Activated CD4-positive, alpha-beta memory T cell treated with anti-CD3 and anti-CD28 coated beads for 36 hours (primary cell): ENCODE measurements at regions of chr5 and their contacts with region 1.

Region 1: GRCh38 chr5:132419502-132420468 is 50.3 kb downstream of the SLC22A5 start:
- DNase-seq: peak; percentile 78
- H3K4me3 Mint-ChIP-seq: peak overlapping the region; percentile 15
- H3K27ac Mint-ChIP-seq: peak overlapping the region; percentile 83
- H3K4me1 Mint-ChIP-seq: peaks cover 89% of the 10 kb centered on the region
- H3K27me3 Mint-ChIP-seq: no peaks in the 10 kb centered on the region

Region 2: GRCh38 chr5:132473019-132473531 is 53.3 kb after region 1 on chr5:
- CTCF ChIA-PET with region 1: interaction called, 14 read pairs
- POLR2A ChIA-PET with region 1: interaction called, 361 read pairs
- intact Hi-C with region 1: no loop called
- DNase-seq: peak; percentile 90
- H3K4me3 Mint-ChIP-seq: peak overlapping the region; percentile 7
- H3K27ac Mint-ChIP-seq: peak overlapping the region; percentile 91
- H3K4me1 Mint-ChIP-seq: peaks cover 75% of the 10 kb centered on the region
- H3K27me3 Mint-ChIP-seq: no peaks in the 10 kb centered on the region

Region 3: DNA sequence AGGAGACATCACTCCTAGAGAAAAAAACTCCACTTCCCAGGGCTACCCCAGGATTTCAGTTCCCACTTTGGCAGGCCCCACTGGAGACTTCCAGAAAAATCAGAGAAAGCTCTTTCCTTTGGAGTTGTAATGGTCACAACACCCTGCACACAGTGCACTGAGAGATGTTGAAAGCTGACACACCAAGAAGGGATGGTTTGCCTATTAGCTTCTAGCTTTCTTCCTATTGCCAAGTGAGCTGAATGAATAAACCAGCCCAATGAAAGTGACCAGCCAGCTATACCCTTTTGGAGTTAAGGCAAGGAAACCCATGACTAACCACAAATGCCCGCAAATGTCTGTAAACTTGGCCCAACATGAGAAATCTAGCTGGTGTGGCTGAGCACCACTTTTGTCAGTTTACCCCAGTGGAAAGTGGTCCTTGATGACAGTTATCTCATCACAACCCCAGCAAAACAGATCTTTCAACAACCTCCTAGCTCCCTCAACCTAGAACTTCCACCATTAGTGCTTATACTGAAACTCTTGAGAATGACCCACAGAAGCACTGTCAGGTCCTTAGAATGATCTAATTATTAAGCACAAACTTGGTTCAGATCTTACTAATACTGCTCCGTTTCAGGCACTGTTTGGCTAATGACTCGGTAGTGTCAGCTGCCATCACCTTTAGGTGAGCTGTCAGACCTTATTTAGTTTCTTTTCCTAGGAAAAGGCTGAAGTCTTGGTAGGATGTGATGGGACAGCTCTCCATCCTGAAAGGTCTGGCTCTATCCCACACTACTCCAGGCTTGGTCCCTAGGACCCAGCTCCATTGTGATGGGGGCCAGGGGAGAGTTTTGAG is 59.5 kb after region 1 on chr5:
- CTCF ChIA-PET with region 1: interaction called, 10 read pairs
- POLR2A ChIA-PET with region 1: interaction called, 361 read pairs
- intact Hi-C with region 1: no loop called
- DNase-seq: no peak
- H3K4me3 Mint-ChIP-seq: peak overlapping the region; percentile 28
- H3K27ac Mint-ChIP-seq: peak overlapping the region; percentile 87
- H3K4me1 Mint-ChIP-seq: peaks cover 68% of the 10 kb centered on the region
- H3K27me3 Mint-ChIP-seq: no peaks in the 10 kb centered on the region